Activated naive CD4-positive, alpha-beta T cell treated with anti-CD3 and anti-CD28 coated beads for 36 hours (primary cell): ENCODE measurements at regions of chr7 and their contacts with region 1.

Region 1: DNA sequence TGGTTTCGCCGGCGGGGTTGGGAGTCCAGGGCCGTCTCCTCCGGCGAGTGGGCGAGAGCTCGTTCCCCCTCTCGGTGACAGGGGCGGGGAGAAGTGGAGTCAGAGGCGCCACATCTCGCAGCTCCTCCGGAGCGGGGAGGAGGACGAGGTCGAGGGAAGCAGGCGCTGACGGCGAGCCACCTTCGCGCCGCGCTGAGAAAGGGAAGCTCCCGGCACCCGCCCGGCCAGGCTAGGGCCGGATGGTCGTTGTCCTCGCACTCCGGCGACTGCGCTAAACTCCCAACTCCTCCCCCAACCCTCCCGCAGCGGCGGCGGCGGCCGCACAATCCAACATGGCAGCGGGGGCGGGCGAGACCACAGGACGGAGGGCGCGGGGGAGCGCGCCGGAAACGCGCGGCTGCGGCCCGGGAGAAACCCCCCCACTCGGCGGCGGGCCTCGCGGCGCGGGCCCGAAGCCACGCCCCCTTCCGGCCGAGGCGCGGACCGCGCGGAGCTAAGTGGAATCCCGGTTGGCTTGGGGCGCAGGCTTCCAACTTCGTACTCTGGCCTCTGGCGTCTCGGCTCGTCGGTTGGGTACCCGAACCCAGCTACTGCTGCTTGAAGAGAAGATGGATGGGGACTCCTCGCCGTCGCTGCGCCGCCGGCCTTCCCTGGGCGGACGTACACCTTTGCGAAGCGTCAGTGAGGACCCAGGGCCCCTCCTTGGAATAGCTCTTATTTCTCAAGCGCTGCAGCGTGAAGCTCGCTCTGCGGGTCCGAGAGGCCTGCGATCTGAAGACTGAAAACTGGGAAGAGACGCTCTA is at the start of gene WASL:
- DNase-seq: peak; percentile 89
- H3K4me3 Mint-ChIP-seq: peak within 1 kb of the TSS; percentile 95
- H3K27ac Mint-ChIP-seq: peak within 1 kb of the TSS; percentile 95
- H3K4me1 Mint-ChIP-seq: peaks cover 46% of the 10 kb centered on the region
- H3K27me3 Mint-ChIP-seq: no peaks in the 10 kb centered on the region
- total RNA-seq, gene WASL: 3.7 to 3.8 TPM

Region 2: DNA sequence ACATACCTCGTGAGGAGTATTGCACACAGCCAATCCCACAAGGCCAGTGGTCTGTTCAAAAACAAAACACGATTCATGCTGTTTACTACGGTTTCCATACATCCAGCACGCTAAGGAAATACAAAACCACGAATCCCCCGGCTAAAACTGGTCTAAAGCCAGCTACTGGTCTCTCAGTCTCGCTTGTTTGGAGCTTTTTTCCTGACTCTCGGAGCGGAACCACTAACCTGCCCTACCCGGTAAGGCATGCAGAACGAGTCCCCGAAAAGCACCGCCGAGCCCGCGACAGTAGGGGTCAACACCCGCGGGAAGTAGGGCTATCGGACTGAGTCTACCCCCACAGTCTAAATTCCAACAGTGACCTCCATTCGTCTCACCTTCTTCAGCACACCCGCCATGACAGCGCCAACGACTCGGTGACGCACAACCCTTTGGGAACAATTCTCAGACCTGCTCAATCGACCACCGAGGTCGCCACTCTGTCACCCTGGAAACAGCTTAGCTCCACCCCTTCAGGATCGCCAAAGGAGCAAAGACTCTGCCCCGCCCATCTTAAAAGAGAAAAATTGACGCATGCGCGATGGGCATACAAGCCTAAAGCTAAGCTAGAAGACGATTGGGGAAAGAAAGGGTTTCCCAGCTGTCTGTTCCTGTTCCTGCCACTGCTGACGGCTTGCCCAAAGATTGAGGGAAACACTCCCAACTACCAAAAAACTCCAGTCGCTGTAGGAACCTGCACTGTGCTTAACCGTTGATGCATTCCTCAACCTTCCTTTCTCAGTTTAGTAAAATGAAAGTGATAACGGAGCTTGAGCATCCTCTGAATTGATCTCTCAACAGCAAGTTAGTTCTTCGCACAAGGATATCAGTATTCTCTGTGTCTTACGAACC is 191.3 kb before region 1 on chr7 and contains the start of gene NDUFA5:
- CTCF ChIA-PET with region 1: no interaction called
- intact Hi-C with region 1: loop called (anchors 1 kb)
- DNase-seq: peak; percentile 98
- H3K4me3 Mint-ChIP-seq: no peak within 1 kb of the TSS
- H3K27ac Mint-ChIP-seq: no peak within 1 kb of the TSS
- H3K4me1 Mint-ChIP-seq: peaks cover 18% of the 10 kb centered on the region
- H3K27me3 Mint-ChIP-seq: no peaks in the 10 kb centered on the region
- total RNA-seq, gene NDUFA5: 58.9 to 60.7 TPM

Region 3: GRCh38 chr7:123643495-123644441 is 105.2 kb before region 1 on chr7:
- CTCF ChIA-PET with region 1: no interaction called
- intact Hi-C with region 1: no loop called
- DNase-seq: no peak
- H3K4me3 Mint-ChIP-seq: no peak overlapping the region
- H3K27ac Mint-ChIP-seq: no peak overlapping the region
- H3K4me1 Mint-ChIP-seq: no peaks in the 10 kb centered on the region
- H3K27me3 Mint-ChIP-seq: peaks cover 3% of the 10 kb centered on the region

Region 4: GRCh38 chr7:123712619-123713018 is 36.3 kb before region 1 on chr7:
- CTCF ChIA-PET with region 1: interaction called, 3 read pairs
- intact Hi-C with region 1: loop called (anchors 1 kb)
- DNase-seq: no peak
- H3K4me3 Mint-ChIP-seq: no peak overlapping the region
- H3K27ac Mint-ChIP-seq: peak overlapping the region; percentile 14
- H3K4me1 Mint-ChIP-seq: peaks cover 52% of the 10 kb centered on the region
- H3K27me3 Mint-ChIP-seq: no peaks in the 10 kb centered on the region

Region 5: GRCh38 chr7:123727071-123727837 is 21.7 kb before region 1 on chr7:
- CTCF ChIA-PET with region 1: no interaction called
- intact Hi-C with region 1: loop called (anchors 1 kb)
- DNase-seq: no peak
- H3K4me3 Mint-ChIP-seq: no peak overlapping the region
- H3K27ac Mint-ChIP-seq: no peak overlapping the region
- H3K4me1 Mint-ChIP-seq: peaks cover 41% of the 10 kb centered on the region
- H3K27me3 Mint-ChIP-seq: no peaks in the 10 kb centered on the region

Region 6: GRCh38 chr7:123770378-123770777 is 21.4 kb after region 1 on chr7:
- CTCF ChIA-PET with region 1: no interaction called
- intact Hi-C with region 1: loop called (anchors 2 kb)
- DNase-seq: no peak
- H3K4me3 Mint-ChIP-seq: no peak overlapping the region
- H3K27ac Mint-ChIP-seq: no peak overlapping the region
- H3K4me1 Mint-ChIP-seq: peaks cover 5% of the 10 kb centered on the region
- H3K27me3 Mint-ChIP-seq: peaks cover 5% of the 10 kb centered on the region

Region 7: DNA sequence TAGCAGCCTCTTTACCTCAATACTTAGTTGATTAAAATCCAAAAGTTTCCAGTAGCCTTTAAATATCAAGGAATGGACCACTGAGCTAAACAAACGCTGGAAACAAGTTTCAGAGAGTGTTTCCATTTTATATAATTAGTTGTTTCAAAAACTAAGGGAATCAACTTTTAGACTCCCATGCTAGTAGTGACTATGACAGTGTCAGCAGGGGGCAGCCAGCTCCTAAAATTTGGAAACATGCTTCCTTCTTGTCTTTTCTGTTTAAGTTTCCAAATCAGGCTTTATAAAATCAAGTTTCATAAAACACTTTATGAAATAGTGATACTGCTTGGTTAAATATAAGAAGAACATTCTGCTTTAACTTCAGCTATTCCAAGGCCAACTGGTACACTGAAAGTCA is 422.1 kb after region 1 on chr7:
- CTCF ChIA-PET with region 1: no interaction called
- intact Hi-C with region 1: no loop called
- DNase-seq: peak; percentile 16
- H3K4me3 Mint-ChIP-seq: no peak overlapping the region
- H3K27ac Mint-ChIP-seq: no peak overlapping the region
- H3K4me1 Mint-ChIP-seq: no peaks in the 10 kb centered on the region
- H3K27me3 Mint-ChIP-seq: no peaks in the 10 kb centered on the region

Region 8: GRCh38 chr7:124929467-124930172 is 1180.7 kb after region 1 on chr7 and contains the start of gene POT1:
- CTCF ChIA-PET with region 1: no interaction called
- intact Hi-C with region 1: loop called (anchors 2 kb)
- DNase-seq: peak; percentile 98
- H3K4me3 Mint-ChIP-seq: peak within 1 kb of the TSS; percentile 97
- H3K27ac Mint-ChIP-seq: peak within 1 kb of the TSS; percentile 90
- H3K4me1 Mint-ChIP-seq: peaks cover 43% of the 10 kb centered on the region
- H3K27me3 Mint-ChIP-seq: no peaks in the 10 kb centered on the region
- total RNA-seq, gene POT1: 36.1 to 38.3 TPM